ENCODE measurements at regions of chr18 and their contacts with region 1.

Region 1: GRCh38 chr18:35972197-35973052 is at the start of gene RMP24:
- DNase-seq: peak; percentile 94
- ATAC-seq: peak; percentile 97
- H3K4me3 ChIP-seq: peak within 1 kb of the TSS; percentile 94 to 99 (median 96)
- H3K27ac ChIP-seq: peak within 1 kb of the TSS; percentile 73
- H3K4me1 ChIP-seq: peaks cover 25% of the 10 kb centered on the region
- H3K27me3 ChIP-seq: no peaks in the 10 kb centered on the region; a peak in 1 of 5 replicates
- CTCF ChIP-seq: peak; percentile 14; the same call in 1 of the 2 replicates
- EP300 ChIP-seq: peak in 1 of 2 experiments; percentile 39; a peak in 1 of 4 replicates
- POLR2A ChIP-seq: peak; percentile 72 to 86
- RAD21 ChIP-seq: peak; percentile 15

Region 2: GRCh38 chr18:35386600-35387351 is 585.6 kb before region 1 on chr18:
- CTCF ChIA-PET with region 1: no interaction called
- POLR2A ChIA-PET with region 1: no interaction called
- in situ Hi-C with region 1: loop called (anchors 25 kb)
- intact Hi-C with region 1: no loop called
- DNase-seq: peak; percentile 70
- ATAC-seq: peak; percentile 87
- H3K4me3 ChIP-seq: no peak overlapping the region
- H3K27ac ChIP-seq: no peak overlapping the region
- H3K4me1 ChIP-seq: peaks cover 7% of the 10 kb centered on the region
- H3K27me3 ChIP-seq: 0 out of 5 replicates have a peak, but pooled peaks cover 0 to 8% of the 10 kb centered on the region in 2 experiments
- CTCF ChIP-seq: peak; percentile 79
- EP300 ChIP-seq: no peak
- POLR2A ChIP-seq: no peak
- RAD21 ChIP-seq: peak; percentile 39

Region 3: DNA sequence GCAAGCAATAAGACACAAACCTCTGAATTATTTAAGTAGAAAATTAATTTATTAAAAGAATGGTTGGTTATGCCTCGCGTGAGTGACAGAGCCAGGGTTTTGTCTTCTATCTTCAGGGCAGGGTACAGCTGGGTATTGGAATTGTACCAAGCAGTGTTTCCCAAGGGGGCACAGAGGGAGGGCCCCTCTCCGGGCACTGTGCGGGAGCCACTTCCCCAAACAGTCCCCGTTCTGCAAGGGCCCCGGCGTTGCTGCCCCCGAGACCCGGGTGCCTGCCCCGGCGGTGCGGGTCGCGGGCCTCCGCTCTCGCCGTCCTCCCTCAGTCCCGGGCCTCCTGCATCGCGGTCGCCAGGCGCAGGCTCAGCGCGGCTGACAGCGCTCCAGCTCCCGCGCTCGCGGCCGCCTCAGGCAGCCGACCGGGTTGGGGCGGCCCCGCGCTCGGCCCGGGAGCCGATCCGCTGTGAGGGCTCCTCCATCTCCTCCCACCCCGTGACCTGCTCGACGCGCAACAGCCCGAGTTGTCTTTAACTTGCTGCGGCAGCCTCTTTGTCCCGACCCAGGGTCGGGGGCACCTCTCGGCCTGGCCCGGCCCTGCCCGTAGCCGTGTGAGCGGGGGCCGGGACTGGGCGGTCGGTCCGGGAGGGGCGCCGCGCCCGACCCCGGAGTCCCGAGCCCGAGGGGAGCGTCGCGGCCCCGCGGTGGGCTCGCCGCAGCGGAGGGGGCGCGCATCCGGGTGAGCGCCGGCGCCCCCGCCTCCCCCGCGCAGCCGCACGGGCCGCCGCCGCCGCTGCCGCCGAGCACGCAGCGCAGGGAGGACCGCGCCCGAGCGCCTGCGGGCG is 391.5 kb before region 1 on chr18:
- CTCF ChIA-PET with region 1: no interaction called
- POLR2A ChIA-PET with region 1: no interaction called
- in situ Hi-C with region 1: no loop called
- intact Hi-C with region 1: loop called (anchors 5 kb)
- DNase-seq: peak; percentile 23
- ATAC-seq: peak; percentile 88
- H3K4me3 ChIP-seq: peak overlapping the region; percentile 66 to 79 (median 67); a peak in 5 of 6 replicates
- H3K27ac ChIP-seq: peak overlapping the region; percentile 62
- H3K4me1 ChIP-seq: peaks cover 16% of the 10 kb centered on the region
- H3K27me3 ChIP-seq: 0 out of 5 replicates have a peak, but pooled peaks cover 0 to 3% of the 10 kb centered on the region in 2 experiments
- CTCF ChIP-seq: no peak
- EP300 ChIP-seq: no peak
- POLR2A ChIP-seq: no peak
- RAD21 ChIP-seq: no peak; the same call in none of the 2 replicates

Region 4: GRCh38 chr18:35917044-35917443 is 55.4 kb before region 1 on chr18:
- CTCF ChIA-PET with region 1: no interaction called
- POLR2A ChIA-PET with region 1: no interaction called
- in situ Hi-C with region 1: no loop called
- intact Hi-C with region 1: loop called (anchors 1 kb)
- DNase-seq: no peak
- ATAC-seq: peak; percentile 47; the same call in 2 of the 3 replicates
- H3K4me3 ChIP-seq: no peak overlapping the region
- H3K27ac ChIP-seq: no peak overlapping the region
- H3K4me1 ChIP-seq: no peaks in the 10 kb centered on the region
- H3K27me3 ChIP-seq: 0 out of 5 replicates have a peak, but pooled peaks cover 0 to 5% of the 10 kb centered on the region in 2 experiments
- CTCF ChIP-seq: peak; percentile 44
- EP300 ChIP-seq: no peak
- POLR2A ChIP-seq: no peak
- RAD21 ChIP-seq: no peak

Region 5: GRCh38 chr18:35949903-35950627 is 22.4 kb before region 1 on chr18:
- CTCF ChIA-PET with region 1: no interaction called
- POLR2A ChIA-PET with region 1: interaction called, 4 read pairs
- in situ Hi-C with region 1: no loop called
- intact Hi-C with region 1: loop called (anchors 1 kb)
- DNase-seq: peak; percentile 56
- ATAC-seq: peak; percentile 90
- H3K4me3 ChIP-seq: peak overlapping the region; percentile 59 to 81 (median 65)
- H3K27ac ChIP-seq: no peak overlapping the region
- H3K4me1 ChIP-seq: peaks cover 11% of the 10 kb centered on the region
- H3K27me3 ChIP-seq: peaks cover 0 to 8% of the 10 kb centered on the region in 2 experiments; a peak in 3 of 5 replicates
- CTCF ChIP-seq: peak; percentile 86
- EP300 ChIP-seq: no peak
- POLR2A ChIP-seq: no peak
- RAD21 ChIP-seq: peak; percentile 63